Panc1 (cell line): ENCODE measurements at regions of chr1 and their contacts with region 1.

Region 1: GRCh38 chr1:13965770-13966398 is 265.9 kb downstream of the PRDM2 start:
- DNase-seq: no peak
- ATAC-seq: peak; percentile 92
- H3K4me3 ChIP-seq: no peak overlapping the region
- H3K27ac ChIP-seq: no peak overlapping the region
- H3K4me1 ChIP-seq: no peaks in the 10 kb centered on the region
- H3K27me3 ChIP-seq: peaks cover 2% of the 10 kb centered on the region; the same call in 1 of the 2 replicates
- CTCF ChIP-seq: peak; percentile 72

Region 2: GRCh38 chr1:13807213-13807612 is 158.7 kb before region 1 on chr1:
- CTCF ChIA-PET with region 1: no interaction called
- POLR2A ChIA-PET with region 1: no interaction called
- in situ Hi-C with region 1: no loop called
- intact Hi-C with region 1: no loop called
- DNase-seq: no peak
- ATAC-seq: peak; percentile 60; the same call in 1 of the 2 replicates
- H3K4me3 ChIP-seq: no peak overlapping the region
- H3K27ac ChIP-seq: no peak overlapping the region
- H3K4me1 ChIP-seq: no peaks in the 10 kb centered on the region
- H3K27me3 ChIP-seq: no peaks in the 10 kb centered on the region
- CTCF ChIP-seq: peak; percentile 64

Region 3: DNA sequence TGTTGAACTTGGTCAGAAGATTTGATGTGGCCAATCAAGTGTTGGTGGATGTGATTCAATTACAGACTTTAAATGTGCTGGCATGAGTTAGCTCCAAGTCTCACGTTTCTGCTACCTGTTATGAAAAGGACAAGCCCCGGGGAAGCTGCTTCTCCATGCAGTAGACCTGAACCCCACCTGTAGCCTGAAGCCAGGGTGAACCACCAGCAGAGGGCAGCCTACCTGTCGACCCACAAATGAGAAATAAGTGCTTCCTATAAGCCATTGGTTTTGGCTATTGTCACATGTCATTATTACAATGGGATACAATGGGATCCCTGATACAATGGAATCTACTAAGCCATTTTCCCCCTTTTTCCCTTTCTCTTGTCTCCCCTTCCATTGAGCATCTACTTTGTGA is 35.7 kb before region 1 on chr1:
- CTCF ChIA-PET with region 1: interaction called, 11 read pairs
- POLR2A ChIA-PET with region 1: no interaction called
- in situ Hi-C with region 1: no loop called
- intact Hi-C with region 1: no loop called
- DNase-seq: no peak
- ATAC-seq: no peak
- H3K4me3 ChIP-seq: no peak overlapping the region
- H3K27ac ChIP-seq: no peak overlapping the region
- H3K4me1 ChIP-seq: no peaks in the 10 kb centered on the region
- H3K27me3 ChIP-seq: peaks cover 2% of the 10 kb centered on the region; the same call in 1 of the 2 replicates
- CTCF ChIP-seq: peak; percentile 64

Region 4: DNA sequence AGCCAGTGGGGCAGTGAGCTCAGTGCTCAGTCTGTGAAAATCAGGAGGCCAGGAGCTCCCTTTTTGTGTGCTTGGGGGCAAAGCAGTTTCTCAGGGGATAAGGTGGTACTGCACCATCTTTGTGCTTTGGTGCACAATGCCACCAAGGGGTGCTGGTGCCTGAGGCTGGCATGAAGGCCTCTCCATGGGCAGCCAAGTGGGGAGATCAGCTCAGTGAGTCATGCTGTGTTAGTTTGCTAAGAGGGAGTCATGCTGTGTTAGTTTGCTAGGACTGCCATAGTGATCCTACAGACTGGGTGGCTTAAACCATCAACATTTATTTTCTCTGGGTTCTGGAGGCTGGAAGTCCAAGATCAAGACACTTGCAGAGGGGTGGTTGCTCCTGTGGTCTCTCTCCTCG is 162.2 kb after region 1 on chr1:
- CTCF ChIA-PET with region 1: no interaction called
- POLR2A ChIA-PET with region 1: no interaction called
- in situ Hi-C with region 1: no loop called
- intact Hi-C with region 1: no loop called
- DNase-seq: no peak
- ATAC-seq: peak; percentile 68
- H3K4me3 ChIP-seq: no peak overlapping the region
- H3K27ac ChIP-seq: no peak overlapping the region
- H3K4me1 ChIP-seq: no peaks in the 10 kb centered on the region
- H3K27me3 ChIP-seq: no peaks in the 10 kb centered on the region
- CTCF ChIP-seq: no peak

Region 5: GRCh38 chr1:15046487-15047165 is 1080.7 kb after region 1 on chr1:
- CTCF ChIA-PET with region 1: no interaction called
- POLR2A ChIA-PET with region 1: no interaction called
- in situ Hi-C with region 1: no loop called
- intact Hi-C with region 1: loop called (anchors 2 kb)
- DNase-seq: peak; percentile 24
- ATAC-seq: peak; percentile 82
- H3K4me3 ChIP-seq: no peak overlapping the region
- H3K27ac ChIP-seq: no peak overlapping the region
- H3K4me1 ChIP-seq: no peaks in the 10 kb centered on the region
- H3K27me3 ChIP-seq: no peaks in the 10 kb centered on the region
- CTCF ChIP-seq: peak; percentile 95